CD8-positive, alpha-beta memory T cell (primary cell): ENCODE measurements at regions of chr19 and their contacts with region 1.

Region 1: GRCh38 chr19:19776041-19777008 is 43.4 kb upstream of the ZNF14 start:
- DNase-seq: peak; percentile 85 to 92 (median 88)
- H3K4me3 ChIP-seq: peak overlapping the region; percentile 99
- H3K4me3 Mint-ChIP-seq: peak overlapping the region; percentile 90 to 100 (median 98)
- H3K27ac ChIP-seq: peak overlapping the region; percentile 70
- H3K27ac Mint-ChIP-seq: peak overlapping the region; percentile 76 to 99 (median 98)
- H3K4me1 ChIP-seq: peaks cover 24% of the 10 kb centered on the region
- H3K4me1 Mint-ChIP-seq: peaks cover 51 to 71% (median 54%) of the 10 kb centered on the region in 3 donors
- H3K27me3 ChIP-seq: no peaks in the 10 kb centered on the region
- H3K27me3 Mint-ChIP-seq: no peaks in the 10 kb centered on the region

Region 2: GRCh38 chr19:19732579-19733501 is 43.5 kb before region 1 on chr19 and contains the start of gene ZNF14:
- CTCF ChIA-PET with region 1: interaction called, 5 read pairs
- POLR2A ChIA-PET with region 1: interaction called, 14 read pairs
- DNase-seq: peak; percentile 85 to 94 (median 88)
- H3K4me3 ChIP-seq: peak within 1 kb of the TSS; percentile 75
- H3K4me3 Mint-ChIP-seq: peak within 1 kb of the TSS; percentile 92 to 100 (median 99)
- H3K27ac ChIP-seq: peak within 1 kb of the TSS; percentile 90
- H3K27ac Mint-ChIP-seq: peak within 1 kb of the TSS; percentile 83 to 99 (median 97)
- H3K4me1 ChIP-seq: peaks cover 15% of the 10 kb centered on the region
- H3K4me1 Mint-ChIP-seq: peaks cover 28 to 45% (median 30%) of the 10 kb centered on the region in 3 donors
- H3K27me3 ChIP-seq: no peaks in the 10 kb centered on the region
- H3K27me3 Mint-ChIP-seq: peaks cover 0 to 2% of the 10 kb centered on the region in 2 donors
- total RNA-seq, gene ZNF14: 7.4 to 7.8 TPM